ENCODE measurements at regions of chr2 and their contacts with region 1.

Region 1: GRCh38 chr2:33272001-33272400 is 204.4 kb upstream of the RASGRP3 start:
- DNase-seq: no peak
- H3K4me3 ChIP-seq: no peak overlapping the region
- H3K27ac ChIP-seq: no peak overlapping the region
- H3K4me1 ChIP-seq: no peaks in the 10 kb centered on the region
- H3K27me3 ChIP-seq: no peaks in the 10 kb centered on the region
- CTCF ChIP-seq: no peak
- POLR2A ChIP-seq: no peak

Region 2: DNA sequence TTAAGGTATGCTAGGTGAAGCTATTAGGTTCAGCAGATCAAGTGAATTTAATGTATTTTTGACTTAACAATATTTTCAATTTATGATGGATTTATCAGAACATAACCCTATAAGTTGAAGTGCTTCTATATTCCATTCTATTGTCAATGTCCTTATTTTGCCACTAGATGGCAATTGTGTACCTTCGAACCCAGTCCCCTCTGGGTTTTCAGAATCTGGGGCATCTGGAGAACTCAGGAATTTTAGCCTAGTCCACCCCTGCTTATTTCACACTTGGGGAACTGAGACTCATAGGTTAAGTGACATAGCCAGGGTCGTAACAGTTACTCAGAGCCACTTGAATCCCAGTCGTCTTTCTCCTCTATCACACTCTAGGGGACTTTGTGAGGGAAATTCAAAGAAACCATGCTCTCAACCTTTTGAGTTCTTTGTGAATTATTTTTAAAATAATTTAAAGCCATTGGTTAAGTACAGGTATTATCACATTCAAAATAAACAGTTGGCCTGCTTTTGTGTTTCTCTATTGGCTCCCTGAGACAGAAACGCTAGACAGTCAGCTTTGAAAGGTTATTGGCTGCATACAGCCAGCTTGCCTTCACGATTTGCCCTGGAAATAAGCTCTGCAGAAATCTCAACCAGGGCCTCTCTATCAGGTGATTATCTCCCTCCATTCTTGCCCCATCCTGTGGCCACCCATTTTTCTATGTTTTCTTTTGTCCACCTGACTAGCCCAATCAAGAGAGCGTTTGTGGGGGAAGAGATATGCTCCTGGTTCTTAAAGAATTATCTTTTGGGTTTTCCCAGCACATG is 499.2 kb before region 1 on chr2:
- intact Hi-C with region 1: loop called in 1 of 2 experiments (anchors 5 kb)
- DNase-seq: peak in 4 of 7 donors; percentile 14 to 24 (median 19)
- H3K4me3 ChIP-seq: no peak overlapping the region
- H3K27ac ChIP-seq: no peak overlapping the region
- H3K4me1 ChIP-seq: no peaks in the 10 kb centered on the region
- H3K27me3 ChIP-seq: no peaks in the 10 kb centered on the region
- CTCF ChIP-seq: peak; percentile 64 to 80 (median 71)
- POLR2A ChIP-seq: no peak

Region 3: GRCh38 chr2:33033606-33034081 is 238.4 kb before region 1 on chr2:
- intact Hi-C with region 1: loop called in 1 of 2 experiments (anchors 10 kb)
- DNase-seq: peak in 1 of 7 donors; percentile 14
- H3K4me3 ChIP-seq: peak overlapping the region in 1 of 4 donors; percentile 2
- H3K27ac ChIP-seq: no peak overlapping the region
- H3K4me1 ChIP-seq: no peaks in the 10 kb centered on the region
- H3K27me3 ChIP-seq: no peaks in the 10 kb centered on the region
- CTCF ChIP-seq: peak in 5 of 6 experiments; percentile 43 to 58 (median 56)
- POLR2A ChIP-seq: no peak